Breast epithelium (tissue), 4 donors: ENCODE measurements at regions of chr15 and their contacts with region 1.

Region 1: DNA sequence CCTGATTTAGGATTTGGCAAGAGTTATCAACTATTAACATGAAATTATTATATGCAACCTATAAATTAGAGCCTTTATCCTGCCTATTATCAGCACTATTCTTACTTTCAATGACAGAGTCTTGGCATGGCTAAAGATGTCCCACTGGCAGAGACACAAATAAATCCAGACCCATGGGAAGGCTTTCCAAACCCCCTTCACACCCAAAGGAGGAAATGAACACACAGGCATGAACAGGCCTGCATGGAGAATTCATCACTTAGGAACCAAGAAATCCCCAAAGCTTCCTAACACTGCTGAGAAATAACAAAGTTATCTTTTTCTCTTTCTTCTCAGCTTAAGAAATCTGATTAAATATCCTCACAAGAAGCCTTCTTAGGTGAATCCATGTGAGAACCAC is 213.9 kb downstream of the OCA2 start:
- DNase-seq: no peak
- H3K4me3 ChIP-seq: no peak overlapping the region
- H3K27ac ChIP-seq: no peak overlapping the region
- H3K4me1 ChIP-seq: no peaks in the 10 kb centered on the region
- H3K27me3 ChIP-seq: no peaks in the 10 kb centered on the region
- CTCF ChIP-seq: no peak
- POLR2A ChIP-seq: no peak

Region 2: DNA sequence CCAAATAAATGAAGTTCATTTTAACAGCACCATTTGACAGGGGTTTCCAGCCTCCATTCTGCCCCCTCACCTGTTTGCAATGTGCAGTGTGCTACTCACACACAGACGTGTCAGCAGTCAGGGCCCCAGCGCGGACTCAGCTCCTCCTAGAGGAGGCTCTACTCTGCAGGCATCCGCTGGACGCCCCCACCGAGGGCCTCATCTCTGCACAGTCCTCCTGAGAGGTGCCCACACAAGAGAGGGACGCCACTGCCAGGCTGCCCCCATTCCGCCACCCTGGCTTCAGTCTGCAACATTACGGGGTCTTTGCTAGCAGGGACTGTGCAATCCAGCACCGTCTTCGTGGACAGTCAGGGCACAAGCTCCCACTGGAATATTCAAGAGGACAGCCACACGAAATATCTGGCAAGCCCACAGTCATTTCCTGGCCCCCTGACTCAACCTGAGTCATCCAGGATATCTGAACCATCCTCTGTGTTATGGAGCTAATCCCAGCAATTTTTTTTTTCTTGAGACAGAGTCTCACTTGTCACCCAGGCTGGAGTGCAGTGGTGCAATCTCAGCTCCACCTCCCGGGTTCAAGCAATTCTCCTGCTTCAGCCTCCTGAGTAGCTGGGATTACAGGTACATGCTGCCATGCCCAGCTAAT is 41.1 kb before region 1 on chr15:
- intact Hi-C with region 1: no loop called
- DNase-seq: no peak
- H3K4me3 ChIP-seq: no peak overlapping the region
- H3K27ac ChIP-seq: no peak overlapping the region
- H3K4me1 ChIP-seq: no peaks in the 10 kb centered on the region
- H3K27me3 ChIP-seq: no peaks in the 10 kb centered on the region
- CTCF ChIP-seq: no peak
- POLR2A ChIP-seq: no peak

Region 3: GRCh38 chr15:29451201-29451781 is 1566.1 kb after region 1 on chr15:
- intact Hi-C with region 1: loop called (anchors 5 kb)
- DNase-seq: no peak
- H3K4me3 ChIP-seq: no peak overlapping the region
- H3K27ac ChIP-seq: no peak overlapping the region
- H3K4me1 ChIP-seq: no peaks in the 10 kb centered on the region
- H3K27me3 ChIP-seq: no peaks in the 10 kb centered on the region
- CTCF ChIP-seq: no peak
- POLR2A ChIP-seq: no peak